Heart right ventricle (tissue), 16 donors: ENCODE measurements at regions of chr14 and their contacts with region 1.

Region 1: GRCh38 chr14:52124791-52125661 is 56.2 kb upstream of the NID2 start:
- DNase-seq: peak in 1 of 2 donors; percentile 40
- ATAC-seq: peak; percentile 71 to 89 (median 82)
- H3K4me3 ChIP-seq: no peak overlapping the region
- H3K27ac ChIP-seq: peak overlapping the region in 8 of 10 donors; percentile 4 to 82 (median 54)
- H3K4me1 ChIP-seq: peaks cover 0 to 32% (median 19%) of the 10 kb centered on the region in 9 donors
- H3K27me3 ChIP-seq: no peaks in the 10 kb centered on the region
- CTCF ChIP-seq: no peak

Region 2: GRCh38 chr14:50396631-50397390 is 1728.2 kb before region 1 on chr14 and contains the start of gene CDKL1:
- intact Hi-C with region 1: no loop called
- DNase-seq: peak; percentile 44 to 70
- ATAC-seq: peak; percentile 89 to 95 (median 91)
- H3K4me3 ChIP-seq: peak within 1 kb of the TSS; percentile 16 to 84 (median 74)
- H3K27ac ChIP-seq: peak within 1 kb of the TSS; percentile 11 to 89 (median 78)
- H3K4me1 ChIP-seq: peaks cover 0 to 36% (median 17%) of the 10 kb centered on the region in 9 donors
- H3K27me3 ChIP-seq: no peaks in the 10 kb centered on the region
- CTCF ChIP-seq: no peak
- total RNA-seq, gene CDKL1: 0.71 to 6.0 (median 2.4) TPM

Region 3: DNA sequence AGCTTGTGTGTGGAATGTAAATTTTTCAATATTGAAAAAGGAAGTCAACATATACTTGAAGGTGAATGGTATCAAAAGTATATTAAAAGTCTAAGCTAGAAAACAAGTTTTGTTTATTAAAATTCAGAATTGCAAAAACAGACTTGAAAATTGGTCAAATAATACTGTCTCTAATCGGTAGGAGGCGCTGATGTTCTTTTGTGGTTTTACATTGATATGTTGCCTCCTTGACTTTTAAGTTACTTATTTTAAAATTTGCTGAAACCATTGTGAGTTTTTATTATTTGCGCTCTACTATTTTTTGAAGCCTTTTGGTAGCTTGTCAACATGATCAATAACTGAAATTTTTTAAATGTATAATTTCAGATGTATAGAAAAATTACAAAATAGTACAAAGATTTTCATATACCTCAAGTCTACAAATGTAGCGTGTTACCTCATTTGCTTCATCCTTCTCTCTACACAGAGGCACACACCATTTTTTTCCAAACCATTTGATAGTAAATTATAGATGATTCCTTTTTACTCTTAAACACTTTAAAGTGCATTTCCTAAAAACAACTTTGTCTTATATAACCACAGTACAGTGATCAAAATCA is 128.8 kb before region 1 on chr14:
- intact Hi-C with region 1: loop called in 8 of 10 experiments (anchors 2 to 5 kb)
- DNase-seq: peak in 1 of 2 donors; percentile 39
- ATAC-seq: no peak
- H3K4me3 ChIP-seq: no peak overlapping the region
- H3K27ac ChIP-seq: peak overlapping the region in 2 of 10 donors; percentile 5 to 15
- H3K4me1 ChIP-seq: peaks cover 0 to 72% (median 56%) of the 10 kb centered on the region in 9 donors
- H3K27me3 ChIP-seq: no peaks in the 10 kb centered on the region
- CTCF ChIP-seq: peak; percentile 63 to 94 (median 84)

Region 4: GRCh38 chr14:52015411-52016030 is 109.5 kb before region 1 on chr14:
- intact Hi-C with region 1: loop called in 2 of 10 experiments (anchors 2 to 5 kb)
- DNase-seq: peak in 1 of 2 donors; percentile 46
- ATAC-seq: peak in 7 of 8 donors; percentile 18 to 63 (median 51)
- H3K4me3 ChIP-seq: peak overlapping the region in 1 of 10 donors; percentile 12
- H3K27ac ChIP-seq: peak overlapping the region; percentile 65 to 85 (median 74)
- H3K4me1 ChIP-seq: peaks cover 13 to 100% (median 90%) of the 10 kb centered on the region in 9 donors
- H3K27me3 ChIP-seq: no peaks in the 10 kb centered on the region
- CTCF ChIP-seq: peak; percentile 17 to 70 (median 45)

Region 5: GRCh38 chr14:52076334-52076733 is 48.7 kb before region 1 on chr14:
- intact Hi-C with region 1: loop called in 3 of 10 experiments (anchors 5 kb)
- DNase-seq: peak in 1 of 2 donors; percentile 21
- ATAC-seq: peak in 6 of 8 donors; percentile 15 to 75 (median 38)
- H3K4me3 ChIP-seq: no peak overlapping the region
- H3K27ac ChIP-seq: no peak overlapping the region
- H3K4me1 ChIP-seq: peaks cover 0 to 71% (median 34%) of the 10 kb centered on the region in 9 donors
- H3K27me3 ChIP-seq: peaks cover 0 to 7% (median 0%) of the 10 kb centered on the region in 7 donors
- CTCF ChIP-seq: no peak